CD4-positive, alpha-beta memory T cell (primary cell): ENCODE measurements at regions of chr15 and their contacts with region 1.

Region 1: DNA sequence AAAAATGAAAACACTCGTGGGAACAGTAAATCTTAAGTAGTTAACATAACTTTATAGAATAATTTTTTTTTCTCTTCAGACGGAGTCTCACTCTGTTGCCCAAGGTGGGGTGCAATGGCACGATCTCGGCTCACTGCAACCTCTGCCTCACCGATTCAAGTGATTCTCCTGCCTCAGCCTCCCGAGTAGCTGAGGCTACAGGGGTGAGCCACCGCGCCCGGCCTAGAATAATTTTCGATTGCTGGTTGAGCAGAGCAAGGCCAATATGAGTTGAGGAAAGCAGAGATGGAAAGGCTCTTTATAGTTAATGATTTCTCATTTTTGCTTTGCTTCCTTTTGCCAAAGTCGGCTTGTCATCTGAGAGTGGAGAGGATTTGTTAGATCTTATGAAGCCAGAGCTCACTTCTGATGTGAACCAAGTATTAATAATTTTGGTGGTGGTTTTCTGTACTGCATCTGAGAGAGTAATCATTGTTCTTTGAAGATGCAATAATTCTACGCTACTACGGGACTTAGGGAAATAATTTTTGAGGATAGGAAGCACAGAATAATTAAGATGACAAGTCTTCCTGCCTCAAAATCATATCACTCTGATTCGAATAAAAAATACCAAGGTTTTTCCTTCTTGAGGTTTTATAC is 1.6 kb upstream of the GOLM2 start:
- DNase-seq: peak in 3 of 5 donors; percentile 13 to 31 (median 15)
- H3K4me3 ChIP-seq: peak overlapping the region; percentile 92 to 99
- H3K4me3 Mint-ChIP-seq: peak overlapping the region; percentile 89 to 99 (median 95)
- H3K27ac ChIP-seq: peak overlapping the region; percentile 82
- H3K27ac Mint-ChIP-seq: peak overlapping the region; percentile 96 to 100 (median 99)
- H3K4me1 ChIP-seq: peaks cover 36% of the 10 kb centered on the region
- H3K4me1 Mint-ChIP-seq: peaks cover 26 to 53% (median 39%) of the 10 kb centered on the region in 4 donors
- H3K27me3 ChIP-seq: no peaks in the 10 kb centered on the region
- H3K27me3 Mint-ChIP-seq: peaks cover 6 to 9% of the 10 kb centered on the region in 2 donors

Region 2: DNA sequence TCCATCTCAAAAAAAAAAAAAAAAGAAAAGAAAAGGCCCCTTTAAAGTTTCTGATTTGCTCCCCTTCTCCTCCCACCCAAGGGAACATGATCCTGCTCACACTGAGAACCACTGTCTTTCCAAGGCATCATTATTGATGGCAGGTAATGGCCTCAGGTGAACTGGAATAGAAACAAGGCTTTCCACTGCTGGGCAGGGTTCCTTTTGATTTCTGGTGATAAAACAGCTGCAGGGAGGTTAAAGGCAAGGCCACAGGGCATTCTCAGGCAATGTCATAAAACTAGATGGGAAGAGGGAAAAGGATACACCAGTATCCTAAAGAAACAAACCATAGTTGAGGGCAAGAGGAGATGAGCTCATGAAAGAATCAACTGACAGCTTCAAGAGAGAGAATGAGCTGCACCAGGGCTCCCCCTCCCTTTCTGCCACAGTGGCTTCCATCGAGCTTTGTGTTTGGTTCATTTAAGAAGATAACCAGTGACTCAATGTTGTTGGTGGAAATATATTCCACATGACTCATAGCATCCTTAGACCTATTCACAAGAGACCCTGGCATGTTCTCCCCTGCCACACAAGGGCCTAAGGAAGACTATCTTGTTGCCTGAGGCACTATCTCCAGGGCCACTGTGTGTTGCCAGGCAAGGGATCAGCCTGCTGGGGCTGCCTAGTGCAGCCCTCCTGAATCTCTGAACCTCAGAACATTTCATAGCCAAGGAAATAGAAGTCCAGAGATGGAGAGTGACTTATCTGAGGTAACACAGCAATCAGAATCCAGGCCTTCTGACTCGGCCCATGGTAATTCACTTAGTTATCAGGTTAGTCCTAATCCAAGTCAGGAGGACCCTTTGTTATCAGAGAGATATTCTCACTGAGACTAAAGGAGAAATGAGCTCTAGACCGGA is 373.7 kb before region 1 on chr15:
- CTCF ChIA-PET with region 1: no interaction called
- POLR2A ChIA-PET with region 1: no interaction called
- intact Hi-C with region 1: no loop called
- DNase-seq: no peak
- H3K4me3 ChIP-seq: no peak overlapping the region
- H3K4me3 Mint-ChIP-seq: no peak overlapping the region
- H3K27ac ChIP-seq: no peak overlapping the region
- H3K27ac Mint-ChIP-seq: no peak overlapping the region
- H3K4me1 ChIP-seq: no peaks in the 10 kb centered on the region
- H3K4me1 Mint-ChIP-seq: no peaks in the 10 kb centered on the region
- H3K27me3 ChIP-seq: no peaks in the 10 kb centered on the region
- H3K27me3 Mint-ChIP-seq: peaks cover 1 to 6% of the 10 kb centered on the region in 2 donors

Region 3: GRCh38 chr15:44195151-44195740 is 91.7 kb before region 1 on chr15 and contains the start of gene FRMD5:
- CTCF ChIA-PET with region 1: no interaction called
- POLR2A ChIA-PET with region 1: interaction called, 4 read pairs
- intact Hi-C with region 1: loop called (anchors 2 kb)
- DNase-seq: peak; percentile 84 to 88 (median 86)
- H3K4me3 ChIP-seq: peak within 1 kb of the TSS; percentile 24 to 54
- H3K4me3 Mint-ChIP-seq: peak within 1 kb of the TSS; percentile 85 to 94 (median 90)
- H3K27ac ChIP-seq: no peak within 1 kb of the TSS
- H3K27ac Mint-ChIP-seq: peak within 1 kb of the TSS in 6 of 7 donors; percentile 17 to 83 (median 68)
- H3K4me1 ChIP-seq: peaks cover 16% of the 10 kb centered on the region
- H3K4me1 Mint-ChIP-seq: peaks cover 10 to 28% (median 14%) of the 10 kb centered on the region in 4 donors
- H3K27me3 ChIP-seq: peaks cover 33% of the 10 kb centered on the region
- H3K27me3 Mint-ChIP-seq: peaks cover 49 to 59% of the 10 kb centered on the region in 2 donors
- total RNA-seq, gene FRMD5: 0.08 TPM in 1 of 2 experiments, not detected in the other

Region 4: DNA sequence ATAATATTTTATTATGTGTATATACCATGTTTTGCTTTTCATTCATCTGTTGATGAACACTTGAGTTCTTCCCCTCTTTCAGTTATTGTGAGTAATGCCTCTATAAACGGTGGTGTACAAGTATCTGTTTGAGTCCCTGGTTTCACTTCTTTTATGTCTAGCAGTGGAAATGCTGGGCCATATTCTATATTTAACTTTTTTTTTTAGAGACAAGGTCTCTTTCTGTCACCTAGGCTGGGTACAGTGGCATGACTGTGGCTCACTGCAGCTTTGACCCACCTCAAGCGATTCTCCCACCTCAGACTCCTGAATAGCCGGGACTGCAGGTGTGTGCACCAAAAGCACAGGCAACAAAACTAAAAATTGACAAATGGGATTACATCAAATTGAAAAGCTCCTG is 21.5 kb after region 1 on chr15:
- CTCF ChIA-PET with region 1: no interaction called
- POLR2A ChIA-PET with region 1: no interaction called
- intact Hi-C with region 1: loop called (anchors 2 kb)
- DNase-seq: no peak
- H3K4me3 ChIP-seq: no peak overlapping the region
- H3K4me3 Mint-ChIP-seq: peak overlapping the region in 1 of 8 donors; percentile 24
- H3K27ac ChIP-seq: no peak overlapping the region
- H3K27ac Mint-ChIP-seq: no peak overlapping the region
- H3K4me1 ChIP-seq: peaks cover 12% of the 10 kb centered on the region
- H3K4me1 Mint-ChIP-seq: peaks cover 30 to 48% (median 42%) of the 10 kb centered on the region in 4 donors
- H3K27me3 ChIP-seq: no peaks in the 10 kb centered on the region
- H3K27me3 Mint-ChIP-seq: no peaks in the 10 kb centered on the region

Region 5: GRCh38 chr15:44536962-44537734 is 250.2 kb after region 1 on chr15 and contains the start of gene EIF3J:
- CTCF ChIA-PET with region 1: no interaction called
- POLR2A ChIA-PET with region 1: interaction called, 14 read pairs
- intact Hi-C with region 1: loop called (anchors 1 kb)
- DNase-seq: peak; percentile 94 to 96 (median 96)
- H3K4me3 ChIP-seq: peak within 1 kb of the TSS; percentile 71 to 90
- H3K4me3 Mint-ChIP-seq: peak within 1 kb of the TSS; percentile 83 to 96 (median 92)
- H3K27ac ChIP-seq: peak within 1 kb of the TSS; percentile 91
- H3K27ac Mint-ChIP-seq: peak within 1 kb of the TSS; percentile 88 to 97 (median 96)
- H3K4me1 ChIP-seq: peaks cover 48% of the 10 kb centered on the region
- H3K4me1 Mint-ChIP-seq: peaks cover 36 to 68% (median 48%) of the 10 kb centered on the region in 4 donors
- H3K27me3 ChIP-seq: no peaks in the 10 kb centered on the region
- H3K27me3 Mint-ChIP-seq: no peaks in the 10 kb centered on the region
- total RNA-seq, gene EIF3J: 65.0 to 76.8 TPM